GM10248 (cell line): ENCODE measurements at regions of chr4 and their contacts with region 1.

Region 1: DNA sequence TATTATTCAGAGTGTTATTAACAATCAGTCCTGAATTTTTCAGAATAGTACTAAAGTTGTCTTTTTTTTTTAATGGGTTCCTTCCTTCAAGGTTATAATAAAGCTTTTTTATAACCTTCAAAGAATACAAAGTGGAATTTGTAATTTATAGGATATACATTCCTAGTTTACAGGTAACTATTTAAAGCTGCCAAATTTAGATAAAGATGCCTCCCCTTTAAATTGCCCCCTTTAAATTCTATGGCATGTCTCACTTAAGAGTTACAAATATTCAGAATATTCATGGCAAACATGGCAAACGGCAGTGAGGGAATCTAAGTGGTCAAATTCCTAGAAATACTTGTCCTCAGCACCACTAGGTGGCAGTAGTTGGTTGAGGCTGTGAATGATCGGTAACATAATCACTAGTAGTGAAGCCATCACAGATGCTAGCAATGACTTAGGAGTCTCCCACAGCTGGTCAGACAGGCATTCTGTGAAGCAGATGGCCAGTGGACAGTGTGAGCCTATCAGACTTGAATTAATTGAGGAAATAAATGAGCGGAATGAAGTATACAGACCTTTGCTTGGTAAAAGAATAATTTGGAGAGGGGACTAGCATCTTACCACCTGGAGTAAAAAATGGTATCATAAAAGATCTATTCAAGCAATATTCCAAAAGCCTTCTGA is 86.4 kb downstream of the CBR4 start:
- DNase-seq: peak; percentile 59
- CTCF ChIP-seq: peak; percentile 76

Region 2: GRCh38 chr4:168585168-168586091 is 338.2 kb before region 1 on chr4:
- CTCF ChIA-PET with region 1: interaction called, 12 read pairs
- POLR2A ChIA-PET with region 1: no interaction called
- DNase-seq: peak; percentile 34
- CTCF ChIP-seq: peak; percentile 43

Region 3: GRCh38 chr4:168907119-168907698 is 16.5 kb before region 1 on chr4:
- CTCF ChIA-PET with region 1: interaction called, 35 read pairs
- POLR2A ChIA-PET with region 1: no interaction called
- DNase-seq: no peak
- CTCF ChIP-seq: no peak

Region 4: DNA sequence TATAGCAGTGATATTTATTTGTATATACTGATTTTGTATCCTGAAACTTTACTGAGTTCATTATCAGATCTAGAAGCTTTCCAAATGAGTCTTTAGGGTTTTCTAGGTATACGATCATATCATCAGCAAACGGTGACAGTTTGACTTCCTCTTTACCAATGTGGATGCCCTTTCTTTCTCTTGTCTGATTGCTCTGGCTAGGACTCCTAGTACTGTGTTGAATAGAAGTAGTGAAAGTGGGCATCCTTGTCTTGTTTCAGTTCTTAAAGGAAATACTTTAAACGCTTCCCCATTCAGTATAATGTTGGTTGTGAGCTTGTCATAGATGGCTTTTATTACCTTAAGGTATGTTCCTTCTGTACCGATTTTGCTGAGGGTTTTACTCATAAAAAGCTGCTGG is 48.9 kb after region 1 on chr4:
- CTCF ChIA-PET with region 1: no interaction called
- POLR2A ChIA-PET with region 1: no interaction called
- DNase-seq: no peak
- CTCF ChIP-seq: no peak

Region 5: GRCh38 chr4:169010125-169011023 is 86.7 kb after region 1 on chr4 and contains the start of gene CBR4:
- CTCF ChIA-PET with region 1: interaction called, 18 read pairs
- POLR2A ChIA-PET with region 1: no interaction called
- DNase-seq: peak; percentile 91
- CTCF ChIP-seq: peak; percentile 3

Region 6: GRCh38 chr4:169492438-169493163 is 568.9 kb after region 1 on chr4:
- CTCF ChIA-PET with region 1: interaction called, 21 read pairs
- POLR2A ChIA-PET with region 1: no interaction called
- DNase-seq: peak; percentile 50
- CTCF ChIP-seq: peak; percentile 55

Region 7: GRCh38 chr4:169573889-169574288 is 650.2 kb after region 1 on chr4:
- CTCF ChIA-PET with region 1: interaction called, 10 read pairs
- POLR2A ChIA-PET with region 1: no interaction called
- DNase-seq: no peak
- CTCF ChIP-seq: no peak